Activated T-helper 1 cell treated with anti-CD3 and anti-CD28 coated beads, Interleukin-12 subunit alpha, Interleukin-12 subunit beta, Interleukin-2, Interleukin-4 antibody, amounts not matched to agents 30 ng/mL and 10 ng/mL and 1 ng/mL, durations not matched to agents 14 hours and 24 hours and 36 hours (primary cell): ENCODE measurements at regions of chr2 and their contacts with region 1.

Region 1: GRCh38 chr2:27032495-27033252 is at the start of gene TMEM214:
- DNase-seq: peak; percentile 83
- H3K4me3 Mint-ChIP-seq: peak within 1 kb of the TSS; percentile 96
- H3K27ac Mint-ChIP-seq: peak within 1 kb of the TSS; percentile 90
- H3K4me1 Mint-ChIP-seq: peaks cover 46% of the 10 kb centered on the region
- H3K27me3 Mint-ChIP-seq: no peaks in the 10 kb centered on the region
- total RNA-seq, gene TMEM214: 97.5 and 98.1 TPM in 2 replicates

Region 2: DNA sequence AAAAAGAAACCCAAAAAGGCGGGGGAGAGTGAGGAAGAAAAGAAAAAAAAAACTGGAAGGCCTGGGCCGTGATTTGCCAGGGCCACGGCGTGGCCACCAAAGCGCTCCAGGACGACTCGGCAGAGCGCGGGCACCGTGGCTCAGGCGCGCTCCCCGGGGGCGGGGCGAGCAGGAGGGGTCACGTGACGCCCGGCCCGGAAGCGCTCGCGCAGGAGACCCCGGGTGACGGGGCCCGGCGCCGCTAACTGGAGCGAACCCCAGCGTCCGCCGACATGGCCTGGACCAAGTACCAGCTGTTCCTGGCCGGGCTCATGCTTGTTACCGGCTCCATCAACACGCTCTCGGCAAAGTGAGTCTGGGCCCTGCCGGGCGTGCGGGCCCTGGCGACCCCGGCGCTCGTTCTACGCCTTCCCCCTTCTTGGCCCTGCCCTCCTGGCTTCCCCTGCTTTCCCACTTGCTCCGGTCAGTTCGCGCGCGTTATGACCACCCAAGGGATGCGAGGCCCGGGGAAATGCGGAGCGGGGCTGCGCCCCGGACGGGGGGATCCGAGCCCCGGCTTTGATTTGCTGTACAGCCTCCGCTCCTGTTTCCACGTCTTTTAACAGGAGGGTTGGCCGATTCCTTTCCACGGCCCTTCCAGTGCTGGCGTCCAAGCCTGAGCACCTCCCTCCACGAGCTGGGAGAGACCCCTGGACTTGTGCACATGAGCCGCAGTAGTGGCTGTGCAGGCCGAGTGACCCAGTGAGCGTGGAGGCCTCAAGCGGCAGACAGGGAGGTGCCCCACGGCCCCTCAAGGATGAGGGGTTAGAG is 268.4 kb before region 1 on chr2 and contains the start of gene SLC35F6:
- intact Hi-C with region 1: loop called (anchors 1 kb)
- DNase-seq: peak; percentile 81
- H3K4me3 Mint-ChIP-seq: peak within 1 kb of the TSS; percentile 87
- H3K27ac Mint-ChIP-seq: peak within 1 kb of the TSS; percentile 85
- H3K4me1 Mint-ChIP-seq: peaks cover 34% of the 10 kb centered on the region
- H3K27me3 Mint-ChIP-seq: peaks cover 2% of the 10 kb centered on the region
- total RNA-seq, gene SLC35F6: 14.3 and 14.5 TPM in 2 replicates

Region 3: DNA sequence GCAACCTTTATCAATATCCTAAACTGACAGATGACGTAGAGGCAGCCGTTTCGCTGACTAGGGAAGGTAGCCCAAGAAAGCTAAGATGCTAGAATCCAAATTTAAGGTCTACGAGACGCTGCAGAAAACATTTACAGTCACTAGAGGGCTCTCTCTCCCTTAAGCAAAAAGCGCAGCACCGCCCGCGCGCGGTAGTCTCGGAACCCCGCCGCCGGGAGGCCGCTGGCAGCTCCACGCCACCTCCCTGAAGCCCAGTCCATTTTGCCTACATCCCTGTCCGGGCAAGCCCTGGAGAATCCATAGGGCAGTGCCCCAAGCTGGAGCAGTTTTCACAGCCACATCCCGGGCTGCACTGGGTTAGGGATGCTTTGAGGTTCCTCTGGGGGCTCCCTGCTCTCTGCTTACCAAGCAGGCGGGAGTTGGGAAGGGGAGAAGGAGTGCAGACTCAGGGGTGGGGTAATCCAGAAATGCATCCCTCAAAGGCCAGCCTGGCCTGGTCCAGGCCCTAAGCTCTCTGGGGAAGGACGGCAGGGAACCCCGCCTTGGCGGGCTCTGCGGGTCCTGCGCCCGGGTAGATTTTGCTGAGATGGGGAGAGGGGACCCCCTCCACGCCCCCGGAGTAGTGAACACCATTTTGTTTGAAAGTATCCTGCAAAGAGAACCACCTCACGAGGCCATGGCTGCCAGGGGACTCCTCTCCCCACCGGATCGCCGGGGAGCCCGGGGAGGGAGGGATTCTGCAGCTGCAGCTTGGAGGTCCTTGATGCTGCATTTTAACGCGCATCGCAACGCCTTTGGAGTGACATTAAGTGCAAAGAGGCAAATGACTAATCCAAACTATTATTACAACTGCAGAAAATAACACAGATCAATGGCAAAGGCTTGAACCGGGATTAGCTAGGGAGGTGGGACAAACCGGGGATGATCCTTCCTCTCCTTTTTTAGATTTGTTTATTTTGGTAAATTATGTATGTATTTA is 186.1 kb before region 1 on chr2:
- intact Hi-C with region 1: loop called (anchors 1 kb)
- DNase-seq: peak; percentile 50
- H3K4me3 Mint-ChIP-seq: peak overlapping the region; percentile 65
- H3K27ac Mint-ChIP-seq: peak overlapping the region; percentile 50
- H3K4me1 Mint-ChIP-seq: no peaks in the 10 kb centered on the region
- H3K27me3 Mint-ChIP-seq: peaks cover 47% of the 10 kb centered on the region

Region 4: DNA sequence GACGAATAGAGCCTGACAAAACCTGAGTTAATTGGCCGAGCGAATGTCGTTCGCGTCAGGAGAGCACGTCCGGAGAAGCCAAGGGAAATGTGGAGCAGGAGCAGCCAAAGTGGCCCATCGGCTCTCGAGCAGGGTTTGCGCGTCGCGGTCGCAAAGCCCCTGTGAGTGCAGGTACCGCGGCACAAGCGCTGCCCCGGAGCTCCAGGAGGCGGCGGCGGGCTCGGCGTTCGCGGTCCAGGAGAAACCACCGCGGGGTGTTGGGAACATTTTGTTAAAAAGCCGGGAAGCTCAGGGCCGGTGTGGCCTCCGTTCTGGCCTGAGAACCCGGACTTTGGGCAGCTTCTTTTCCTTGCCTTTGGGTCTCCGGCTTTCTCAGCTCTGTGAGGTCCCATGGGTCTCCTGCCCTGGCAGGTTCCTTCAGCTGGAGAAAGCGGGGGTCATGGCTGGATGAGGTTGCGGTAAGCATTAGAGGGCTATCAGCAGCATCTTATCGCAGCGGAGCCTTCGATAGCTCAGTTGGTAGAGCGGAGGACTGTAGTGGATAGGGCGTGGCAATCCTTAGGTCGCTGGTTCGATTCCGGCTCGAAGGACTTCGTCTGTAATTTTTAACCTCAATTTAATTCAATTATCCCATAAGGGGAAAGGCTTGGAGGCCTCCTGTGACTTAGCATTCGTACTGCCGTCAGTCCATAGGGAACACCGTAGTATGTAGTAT is 17.8 kb after region 1 on chr2:
- intact Hi-C with region 1: loop called (anchors 1 kb)
- DNase-seq: peak; percentile 88
- H3K4me3 Mint-ChIP-seq: peak overlapping the region; percentile 96
- H3K27ac Mint-ChIP-seq: peak overlapping the region; percentile 99
- H3K4me1 Mint-ChIP-seq: peaks cover 36% of the 10 kb centered on the region
- H3K27me3 Mint-ChIP-seq: peaks cover 7% of the 10 kb centered on the region

Region 5: GRCh38 chr2:27133905-27134780 is 101.5 kb after region 1 on chr2 and contains the start of gene PREB:
- intact Hi-C with region 1: loop called (anchors 1 kb)
- DNase-seq: peak; percentile 99
- H3K4me3 Mint-ChIP-seq: peak within 1 kb of the TSS; percentile 95
- H3K27ac Mint-ChIP-seq: peak within 1 kb of the TSS; percentile 98
- H3K4me1 Mint-ChIP-seq: peaks cover 12% of the 10 kb centered on the region
- H3K27me3 Mint-ChIP-seq: no peaks in the 10 kb centered on the region
- total RNA-seq, gene PREB: 95.9 and 97.1 TPM in 2 replicates